ENCODE measurements at regions of chr1 and their contacts with region 1.

Region 1: GRCh38 chr1:35641233-35641866 is at the start of gene PSMB2:
- DNase-seq: peak; percentile 80
- ATAC-seq: peak; percentile 91
- H3K4me3 ChIP-seq: peak within 1 kb of the TSS; percentile 98
- H3K27ac ChIP-seq: peak within 1 kb of the TSS; percentile 82
- H3K4me1 ChIP-seq: no peaks in the 10 kb centered on the region; the same call in 1 of the 2 replicates
- H3K27me3 ChIP-seq: no peaks in the 10 kb centered on the region; a peak in 3 of 4 replicates
- CTCF ChIP-seq: no peak
- EP300 ChIP-seq: no peak
- POLR2A ChIP-seq: peak; percentile 98
- RAD21 ChIP-seq: no peak
- polyA plus RNA-seq, gene PSMB2: 289 to 299 TPM

Region 2: DNA sequence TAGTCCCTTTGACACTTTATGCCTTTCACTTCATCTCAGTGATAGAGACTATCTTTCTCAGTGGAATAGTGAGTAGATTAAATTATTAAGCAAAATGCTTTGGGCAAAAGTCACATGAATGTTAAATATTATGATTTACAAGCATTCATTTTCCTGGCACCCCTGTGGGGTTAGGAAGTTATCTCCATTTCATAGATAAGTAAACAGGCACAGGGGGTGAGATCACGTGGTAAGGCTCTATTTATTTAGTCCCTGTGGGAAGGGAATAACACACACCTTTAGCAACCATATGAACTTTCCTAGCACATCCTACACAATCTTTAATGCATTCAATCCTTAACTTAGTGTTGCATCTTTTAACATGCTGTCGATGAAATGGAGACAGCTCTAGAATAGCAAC is 12.3 kb before region 1 on chr1:
- CTCF ChIA-PET with region 1: interaction called, 4 read pairs
- POLR2A ChIA-PET with region 1: no interaction called
- RAD21 ChIA-PET with region 1: no interaction called
- SMC1A ChIA-PET with region 1: interaction called, 15 read pairs
- in situ Hi-C with region 1: no loop called
- intact Hi-C with region 1: no loop called
- DNase-seq: no peak
- ATAC-seq: no peak
- H3K4me3 ChIP-seq: no peak overlapping the region
- H3K27ac ChIP-seq: no peak overlapping the region
- H3K4me1 ChIP-seq: no peaks in the 10 kb centered on the region
- H3K27me3 ChIP-seq: no peaks in the 10 kb centered on the region
- CTCF ChIP-seq: no peak
- EP300 ChIP-seq: no peak
- POLR2A ChIP-seq: no peak
- RAD21 ChIP-seq: no peak

Measured in GM12878 (cell line).